ENCODE measurements at regions of chr2 and their contacts with region 1.

Region 1: DNA sequence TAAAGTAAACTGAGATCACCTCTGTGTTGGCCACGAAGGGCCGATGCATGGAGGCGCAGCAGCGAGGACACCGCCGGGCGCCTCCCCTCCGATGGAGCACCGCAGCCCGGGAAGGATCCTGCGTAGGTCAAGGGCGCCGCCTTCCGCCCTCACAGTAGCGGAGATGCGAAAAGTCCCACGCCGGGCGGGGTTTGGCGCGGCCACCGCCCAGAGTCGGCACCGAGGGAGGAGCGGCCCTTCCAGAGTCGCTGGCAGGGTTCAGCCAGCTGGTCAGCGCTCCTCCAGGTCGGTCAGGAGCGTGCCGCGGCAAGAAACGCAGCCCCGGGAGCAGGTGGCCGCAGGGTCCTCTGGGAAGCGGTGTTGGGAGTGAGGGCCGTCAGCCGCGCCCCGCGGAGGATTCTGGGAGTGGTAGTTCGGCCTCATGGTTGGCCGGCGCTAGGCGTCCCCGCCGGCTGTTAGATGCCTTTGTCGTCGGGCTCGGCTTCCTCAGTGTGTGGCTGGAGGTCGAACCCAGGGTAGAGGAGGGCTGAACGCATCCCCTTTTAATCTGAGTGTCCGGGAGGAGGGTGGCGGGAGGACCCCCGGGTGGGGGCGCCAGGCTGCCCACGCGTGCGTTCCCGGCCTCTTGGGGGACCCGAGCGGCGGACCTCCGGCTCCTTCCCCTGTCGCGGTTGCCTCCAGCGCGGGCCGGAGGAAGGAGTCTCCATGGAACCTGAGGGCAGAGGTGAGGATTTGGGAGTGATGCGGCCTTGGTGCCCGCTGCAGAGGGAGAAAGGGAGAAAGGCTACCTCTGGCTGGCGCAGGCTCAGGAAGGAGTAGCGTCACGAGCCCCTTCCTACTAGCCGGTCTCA is at the start of gene ZNF892:
- DNase-seq: peak; percentile 94
- H3K4me3 ChIP-seq: peak within 1 kb of the TSS; percentile 57
- H3K27ac ChIP-seq: peak within 1 kb of the TSS; percentile 79
- H3K4me1 ChIP-seq: no peaks in the 10 kb centered on the region
- H3K27me3 ChIP-seq: no peaks in the 10 kb centered on the region
- CTCF ChIP-seq: no peak
- total RNA-seq, gene ZNF892: 2.2 to 2.6 TPM

Region 2: DNA sequence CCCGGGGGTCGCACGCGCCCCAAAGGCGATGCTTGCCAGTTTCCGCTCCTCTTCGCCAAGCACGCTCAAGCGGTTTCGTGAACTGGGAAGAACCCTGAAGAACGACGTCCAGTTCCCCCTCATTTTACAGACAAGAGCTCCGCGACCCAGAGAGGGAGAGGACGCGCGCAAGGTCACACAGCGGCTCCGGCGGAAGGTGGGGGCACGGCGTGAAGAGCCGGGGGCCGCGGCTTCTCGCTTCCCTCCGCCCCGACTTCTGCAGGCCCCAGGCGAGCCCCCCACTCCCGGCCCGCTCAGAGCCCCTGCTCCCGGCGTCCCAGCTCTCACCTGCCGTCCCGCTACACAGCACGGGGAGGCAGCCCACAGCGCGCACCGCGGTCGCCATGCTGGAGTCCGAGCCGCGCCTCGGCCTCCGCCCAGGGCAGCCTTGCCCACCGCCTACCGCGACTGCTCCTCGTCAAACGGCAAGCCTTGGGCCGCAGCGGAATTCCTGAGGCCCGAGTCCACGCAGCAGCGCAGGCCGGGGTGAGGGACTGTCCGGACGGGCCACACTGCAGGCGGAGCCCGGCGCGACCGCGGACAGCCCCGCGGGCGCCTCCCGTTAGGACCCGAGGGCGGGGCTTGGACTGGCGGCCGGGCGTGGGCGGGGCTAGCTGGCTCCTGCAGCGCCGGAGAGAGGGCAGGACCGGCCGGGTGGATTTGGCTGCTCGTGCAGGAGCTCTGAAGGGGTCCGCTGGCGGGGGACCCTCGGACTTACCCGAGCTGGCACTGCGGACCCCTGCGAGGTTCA is 85.7 kb before region 1 on chr2 and contains the start of gene MRPS5:
- intact Hi-C with region 1: no loop called
- DNase-seq: peak; percentile 91
- H3K4me3 ChIP-seq: peak within 1 kb of the TSS; percentile 100
- H3K27ac ChIP-seq: peak within 1 kb of the TSS; percentile 95
- H3K4me1 ChIP-seq: peaks cover 11% of the 10 kb centered on the region
- H3K27me3 ChIP-seq: no peaks in the 10 kb centered on the region
- CTCF ChIP-seq: no peak
- total RNA-seq, gene MRPS5: 68.8 to 87.3 TPM

Region 3: GRCh38 chr2:95165129-95166064 is 41.9 kb before region 1 on chr2 and contains the start of gene ZNF2:
- intact Hi-C with region 1: loop called (anchors 5 kb)
- DNase-seq: peak; percentile 99
- H3K4me3 ChIP-seq: peak within 1 kb of the TSS; percentile 94
- H3K27ac ChIP-seq: peak within 1 kb of the TSS; percentile 89
- H3K4me1 ChIP-seq: peaks cover 7% of the 10 kb centered on the region
- H3K27me3 ChIP-seq: no peaks in the 10 kb centered on the region
- CTCF ChIP-seq: no peak
- total RNA-seq, gene ZNF2: 3.3 to 3.5 TPM